Thyroid gland (tissue), 4 donors: ENCODE measurements at regions of chr11 and their contacts with region 1.

Region 1: GRCh38 chr11:31810779-31811647 is at the start of gene PAX6:
- DNase-seq: no peak
- H3K4me3 ChIP-seq: peak within 1 kb of the TSS in 1 of 3 donors; percentile 25
- H3K27ac ChIP-seq: no peak within 1 kb of the TSS
- H3K4me1 ChIP-seq: peaks cover 42 to 73% of the 10 kb centered on the region in 2 donors
- H3K27me3 ChIP-seq: peaks cover 93% of the 10 kb centered on the region
- CTCF ChIP-seq: no peak
- POLR2A ChIP-seq: no peak
- total RNA-seq, gene PAX6: not detected

Region 2: GRCh38 chr11:31757260-31757835 is 53.7 kb before region 1 on chr11:
- intact Hi-C with region 1: loop called (anchors 5 kb)
- DNase-seq: peak; percentile 24 to 27
- H3K4me3 ChIP-seq: no peak overlapping the region
- H3K27ac ChIP-seq: no peak overlapping the region
- H3K4me1 ChIP-seq: peaks cover 5 to 7% of the 10 kb centered on the region in 2 donors
- H3K27me3 ChIP-seq: no peaks in the 10 kb centered on the region
- CTCF ChIP-seq: no peak
- POLR2A ChIP-seq: no peak

Region 3: DNA sequence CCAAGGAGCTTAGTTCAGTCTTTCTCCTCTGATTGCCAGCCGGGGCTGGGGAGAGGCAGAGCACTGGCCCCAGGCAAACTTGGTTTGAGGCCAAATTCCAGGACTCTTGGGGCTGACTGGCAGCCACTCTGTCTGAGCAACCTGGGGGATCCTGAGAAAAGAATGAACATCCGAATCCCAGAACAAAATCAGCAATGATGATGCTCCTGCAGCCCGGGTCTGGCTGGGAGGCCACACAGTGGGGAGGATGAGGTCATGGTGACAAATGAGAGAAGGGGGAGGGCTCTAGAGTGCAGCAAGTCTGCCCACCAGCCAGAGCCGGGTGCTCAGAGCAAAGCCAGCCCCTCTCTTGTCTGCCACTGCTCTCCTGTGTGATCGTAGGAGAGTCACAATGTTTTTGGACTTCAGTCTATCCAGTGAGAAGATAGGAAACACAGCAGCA is 72.0 kb after region 1 on chr11:
- intact Hi-C with region 1: no loop called
- DNase-seq: no peak
- H3K4me3 ChIP-seq: no peak overlapping the region
- H3K27ac ChIP-seq: no peak overlapping the region
- H3K4me1 ChIP-seq: no peaks in the 10 kb centered on the region
- H3K27me3 ChIP-seq: no peaks in the 10 kb centered on the region
- CTCF ChIP-seq: no peak
- POLR2A ChIP-seq: no peak

Region 4: GRCh38 chr11:31956310-31956709 is 145.3 kb after region 1 on chr11:
- intact Hi-C with region 1: no loop called
- DNase-seq: no peak
- H3K4me3 ChIP-seq: no peak overlapping the region
- H3K27ac ChIP-seq: no peak overlapping the region
- H3K4me1 ChIP-seq: no peaks in the 10 kb centered on the region
- H3K27me3 ChIP-seq: no peaks in the 10 kb centered on the region
- CTCF ChIP-seq: no peak
- POLR2A ChIP-seq: no peak